ENCODE measurements at regions of chr11 and their contacts with region 1.

Region 1: DNA sequence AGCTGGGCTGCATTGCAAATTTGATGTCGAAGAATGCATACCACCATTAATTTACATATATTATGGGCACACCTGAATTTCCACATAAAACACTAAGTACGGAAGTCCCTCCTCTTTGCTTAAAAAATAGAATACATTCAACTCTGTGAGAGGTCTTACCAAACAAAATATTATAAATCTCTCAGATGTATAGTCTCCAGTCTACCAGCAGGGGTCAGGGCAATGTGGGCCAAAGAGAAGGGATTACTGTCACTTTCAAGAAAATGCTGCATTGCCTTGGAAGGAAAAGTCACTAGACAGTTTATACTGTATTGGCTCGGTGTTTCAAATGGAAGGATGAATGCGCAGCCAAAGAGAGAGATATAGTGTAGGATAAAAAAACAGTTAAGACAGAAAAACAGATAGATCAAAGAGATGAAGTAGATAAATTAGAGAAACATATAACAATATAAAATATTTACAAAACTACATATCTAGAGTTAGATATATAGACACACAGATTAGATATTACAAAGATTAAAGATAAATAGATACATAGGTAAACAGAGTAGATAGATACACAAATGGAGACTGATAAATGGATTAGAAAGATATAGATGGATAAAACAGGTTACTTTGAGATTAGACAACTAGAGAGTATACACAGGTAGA is 20.9 kb downstream of the SERGEF start:
- DNase-seq: peak; percentile 68
- H3K4me3 ChIP-seq: no peak overlapping the region
- H3K27ac ChIP-seq: no peak overlapping the region
- H3K4me1 ChIP-seq: peaks cover 11% of the 10 kb centered on the region
- CTCF ChIP-seq: peak; percentile 99

Region 2: DNA sequence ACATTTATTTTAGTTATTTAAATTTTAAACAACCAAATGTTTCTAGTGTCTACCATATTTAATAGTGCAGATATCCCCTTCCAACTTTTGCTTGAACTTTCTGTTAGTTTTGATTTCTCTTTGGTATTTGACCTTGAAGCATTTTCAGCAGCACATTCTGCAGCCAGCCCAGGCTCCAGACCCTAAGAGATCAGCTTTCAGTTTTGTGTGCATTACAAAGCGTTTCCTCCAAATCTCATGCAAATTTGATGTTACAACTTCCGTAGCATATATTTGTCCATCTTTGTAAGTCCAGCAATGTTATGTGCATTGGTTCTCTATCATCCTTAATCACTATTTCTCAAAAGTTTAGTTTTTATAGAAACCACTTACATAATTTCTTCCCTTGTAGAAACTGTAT is 35.6 kb after region 1 on chr11:
- CTCF ChIA-PET with region 1: no interaction called
- POLR2A ChIA-PET with region 1: interaction called, 11 read pairs
- intact Hi-C with region 1: no loop called
- DNase-seq: no peak
- H3K4me3 ChIP-seq: no peak overlapping the region
- H3K27ac ChIP-seq: no peak overlapping the region
- H3K4me1 ChIP-seq: no peaks in the 10 kb centered on the region
- CTCF ChIP-seq: no peak

Region 3: GRCh38 chr11:18081551-18081950 is 89.6 kb after region 1 on chr11:
- CTCF ChIA-PET with region 1: no interaction called
- POLR2A ChIA-PET with region 1: no interaction called
- intact Hi-C with region 1: no loop called
- DNase-seq: no peak
- H3K4me3 ChIP-seq: no peak overlapping the region
- H3K27ac ChIP-seq: no peak overlapping the region
- H3K4me1 ChIP-seq: no peaks in the 10 kb centered on the region
- CTCF ChIP-seq: no peak

Measured in OCI-LY7 (cell line).